Heart left ventricle (tissue), 16 donors: ENCODE measurements at regions of chr12 and their contacts with region 1.

Region 1: GRCh38 chr12:47397664-47398281 is 308.1 kb downstream of the RPAP3 start:
- DNase-seq: no peak
- ATAC-seq: peak in 3 of 4 donors; percentile 61 to 74 (median 67)
- H3K4me3 ChIP-seq: no peak overlapping the region
- H3K27ac ChIP-seq: no peak overlapping the region
- H3K4me1 ChIP-seq: peaks cover 0 to 16% (median 6%) of the 10 kb centered on the region in 12 donors
- H3K27me3 ChIP-seq: no peaks in the 10 kb centered on the region
- CTCF ChIP-seq: peak in 10 of 12 donors; percentile 20 to 52 (median 40)
- POLR2A ChIP-seq: no peak

Region 2: DNA sequence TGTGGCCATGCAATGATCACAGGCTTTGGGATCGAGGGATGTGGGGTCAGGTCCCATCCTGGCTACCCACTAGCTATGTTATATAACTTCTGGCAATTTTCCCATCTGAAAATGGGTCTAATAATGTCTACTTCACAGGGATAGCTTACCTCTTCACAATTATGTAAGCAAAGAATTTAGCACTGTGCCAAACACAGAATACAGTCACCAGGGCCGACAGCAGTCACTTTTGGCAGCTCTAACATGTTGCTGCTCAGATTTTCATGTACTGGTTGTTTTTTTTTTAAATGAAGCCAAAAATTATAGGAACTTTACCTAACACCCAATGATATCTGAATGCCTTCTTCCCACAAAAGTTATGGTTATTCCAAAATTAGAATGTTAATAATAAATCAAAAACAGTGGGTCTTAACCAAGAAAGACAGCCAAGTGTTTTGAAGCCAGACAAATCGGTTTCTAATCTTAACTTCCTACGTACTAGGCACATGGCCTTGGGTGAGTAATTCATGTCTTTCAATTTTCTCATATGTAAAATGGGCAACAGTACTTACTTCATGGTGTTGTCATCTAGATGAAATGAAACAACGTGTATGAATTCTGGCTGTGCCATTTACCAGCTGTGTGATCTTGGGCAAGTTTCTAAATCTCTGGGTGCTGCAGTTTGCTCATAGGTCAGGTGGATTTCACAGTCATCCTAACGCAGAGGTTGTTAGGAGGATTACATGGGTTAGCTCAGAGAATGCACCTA is 331.3 kb before region 1 on chr12:
- intact Hi-C with region 1: loop called in 2 of 10 experiments (anchors 10 kb)
- DNase-seq: no peak
- ATAC-seq: peak in 1 of 4 donors; percentile 68
- H3K4me3 ChIP-seq: no peak overlapping the region
- H3K27ac ChIP-seq: peak overlapping the region in 1 of 12 donors; percentile 40
- H3K4me1 ChIP-seq: peaks cover 0 to 15% (median 0%) of the 10 kb centered on the region in 12 donors
- H3K27me3 ChIP-seq: no peaks in the 10 kb centered on the region
- CTCF ChIP-seq: no peak
- POLR2A ChIP-seq: no peak

Region 3: DNA sequence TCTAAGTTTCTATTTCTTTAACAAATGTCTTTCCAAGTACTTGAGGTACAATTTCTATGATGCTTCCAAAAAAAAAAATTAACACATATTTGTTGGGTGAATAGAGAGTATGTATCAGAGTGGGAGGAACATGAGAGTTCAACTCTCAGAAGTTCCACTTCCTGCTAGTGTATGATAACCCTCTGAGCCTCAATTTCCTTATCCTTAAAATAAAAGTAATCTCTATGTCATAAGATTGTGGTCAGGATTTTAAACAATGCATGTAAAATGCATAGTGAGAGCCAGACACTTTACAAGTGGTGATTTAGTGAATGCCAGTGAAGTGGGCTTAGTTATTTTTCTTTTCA is 47.7 kb before region 1 on chr12:
- intact Hi-C with region 1: no loop called
- DNase-seq: no peak
- ATAC-seq: no peak
- H3K4me3 ChIP-seq: no peak overlapping the region
- H3K27ac ChIP-seq: peak overlapping the region in 1 of 12 donors; percentile 63
- H3K4me1 ChIP-seq: peaks cover 0 to 17% (median 0%) of the 10 kb centered on the region in 12 donors
- H3K27me3 ChIP-seq: peaks cover 0 to 3% (median 0%) of the 10 kb centered on the region in 9 donors
- CTCF ChIP-seq: no peak
- POLR2A ChIP-seq: no peak

Region 4: GRCh38 chr12:47419497-47419896 is 21.7 kb after region 1 on chr12:
- intact Hi-C with region 1: no loop called
- DNase-seq: no peak
- ATAC-seq: no peak
- H3K4me3 ChIP-seq: no peak overlapping the region
- H3K27ac ChIP-seq: no peak overlapping the region
- H3K4me1 ChIP-seq: no peaks in the 10 kb centered on the region
- H3K27me3 ChIP-seq: peaks cover 0 to 5% (median 0%) of the 10 kb centered on the region in 9 donors
- CTCF ChIP-seq: no peak
- POLR2A ChIP-seq: no peak

Region 5: DNA sequence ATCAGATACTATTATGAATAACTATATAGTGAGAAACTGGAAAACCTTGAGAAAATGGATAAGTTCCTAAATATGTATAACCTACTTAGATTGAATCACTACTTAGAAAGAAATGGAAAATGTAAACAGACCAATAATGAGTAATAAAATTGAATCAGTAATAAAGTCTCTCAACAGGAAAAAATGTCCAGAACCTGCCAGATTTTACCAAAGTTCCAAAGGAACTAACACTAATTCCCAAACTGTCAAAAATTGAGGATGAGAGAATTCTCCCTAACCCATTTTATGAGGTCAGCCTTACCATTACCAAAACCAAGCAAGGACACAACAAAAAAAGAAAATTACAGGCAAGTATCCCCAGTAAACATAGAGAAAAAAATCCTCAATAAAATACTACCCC is 36.1 kb after region 1 on chr12:
- intact Hi-C with region 1: no loop called
- DNase-seq: no peak
- ATAC-seq: no peak
- H3K4me3 ChIP-seq: no peak overlapping the region
- H3K27ac ChIP-seq: no peak overlapping the region
- H3K4me1 ChIP-seq: no peaks in the 10 kb centered on the region
- H3K27me3 ChIP-seq: no peaks in the 10 kb centered on the region
- CTCF ChIP-seq: no peak
- POLR2A ChIP-seq: no peak

Region 6: DNA sequence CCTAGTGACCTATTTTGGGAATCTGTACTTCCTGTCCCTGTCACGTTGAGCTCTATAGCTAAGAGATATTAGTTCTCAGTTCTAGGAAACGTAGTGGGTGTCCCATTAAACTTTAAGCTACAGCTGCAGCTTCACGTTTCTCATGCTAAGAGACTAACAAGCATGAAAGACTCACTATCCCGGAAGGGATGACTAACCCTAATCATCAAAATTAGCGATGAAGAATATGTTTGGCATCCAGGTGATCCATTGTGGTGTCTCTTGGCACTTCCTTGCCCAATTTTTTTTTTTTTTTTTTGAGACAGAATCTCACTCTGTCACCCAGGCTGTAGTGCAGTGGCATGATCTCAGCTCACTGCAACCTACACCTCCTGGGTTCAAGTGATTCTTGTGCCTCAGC is 1183.1 kb after region 1 on chr12:
- intact Hi-C with region 1: no loop called
- DNase-seq: no peak
- ATAC-seq: no peak
- H3K4me3 ChIP-seq: no peak overlapping the region
- H3K27ac ChIP-seq: no peak overlapping the region
- H3K4me1 ChIP-seq: no peaks in the 10 kb centered on the region
- H3K27me3 ChIP-seq: peaks cover 0 to 22% (median 3%) of the 10 kb centered on the region in 9 donors
- CTCF ChIP-seq: no peak
- POLR2A ChIP-seq: no peak